Breast epithelium (tissue), 4 donors: ENCODE measurements at regions of chr3 and their contacts with region 1.

Region 1: GRCh38 chr3:171157286-171157685 is 130.8 kb upstream of the SLC2A2 start:
- DNase-seq: no peak
- H3K4me3 ChIP-seq: no peak overlapping the region
- H3K27ac ChIP-seq: no peak overlapping the region
- H3K4me1 ChIP-seq: no peaks in the 10 kb centered on the region
- H3K27me3 ChIP-seq: no peaks in the 10 kb centered on the region
- CTCF ChIP-seq: no peak
- POLR2A ChIP-seq: no peak

Region 2: GRCh38 chr3:171183042-171183441 is 25.8 kb after region 1 on chr3:
- intact Hi-C with region 1: loop called (anchors 1 kb)
- DNase-seq: no peak
- H3K4me3 ChIP-seq: no peak overlapping the region
- H3K27ac ChIP-seq: no peak overlapping the region
- H3K4me1 ChIP-seq: no peaks in the 10 kb centered on the region
- H3K27me3 ChIP-seq: no peaks in the 10 kb centered on the region
- CTCF ChIP-seq: no peak
- POLR2A ChIP-seq: no peak